ENCODE measurements at regions of chr2 and their contacts with region 1.

Region 1: GRCh38 chr2:156341452-156342253 is 9.1 kb upstream of the NR4A2 start:
- DNase-seq: peak; percentile 90
- ATAC-seq: peak; percentile 76
- H3K4me3 ChIP-seq: peak overlapping the region; percentile 95
- H3K27ac ChIP-seq: peak overlapping the region; percentile 98
- H3K4me1 ChIP-seq: peaks cover 43% of the 10 kb centered on the region
- H3K27me3 ChIP-seq: no peaks in the 10 kb centered on the region
- CTCF ChIP-seq: no peak

Region 2: DNA sequence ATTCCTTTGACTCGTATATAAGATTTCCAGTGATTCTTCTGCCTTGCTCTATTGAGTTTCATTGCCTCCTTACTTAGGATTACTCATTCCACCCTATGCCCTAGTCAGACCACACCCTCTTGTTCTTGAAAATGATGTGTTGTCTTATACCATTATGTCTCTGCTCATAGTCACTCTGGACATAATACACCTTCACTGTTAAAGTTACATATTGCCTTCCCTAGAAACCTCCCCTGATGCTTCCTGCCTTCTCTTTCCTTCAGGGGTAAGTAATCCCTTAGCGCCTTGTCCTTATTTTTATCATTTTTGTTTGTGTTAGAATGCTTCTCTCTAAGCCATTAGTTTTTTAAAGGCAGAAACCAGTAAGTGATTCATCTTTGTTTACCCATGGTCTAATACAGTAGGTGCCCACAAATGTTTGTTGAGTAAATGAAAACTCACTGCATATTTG is 113.8 kb after region 1 on chr2:
- CTCF ChIA-PET with region 1: no interaction called
- POLR2A ChIA-PET with region 1: no interaction called
- intact Hi-C with region 1: loop called (anchors 2 kb)
- DNase-seq: peak; percentile 92
- ATAC-seq: peak; percentile 92
- H3K4me3 ChIP-seq: peak overlapping the region; percentile 50; the same call in 1 of the 2 replicates
- H3K27ac ChIP-seq: peak overlapping the region; percentile 98
- H3K4me1 ChIP-seq: peaks cover 45% of the 10 kb centered on the region
- H3K27me3 ChIP-seq: no peaks in the 10 kb centered on the region
- CTCF ChIP-seq: no peak

Region 3: GRCh38 chr2:156553714-156554442 is 212.2 kb after region 1 on chr2:
- CTCF ChIA-PET with region 1: no interaction called
- POLR2A ChIA-PET with region 1: interaction called, 13 read pairs
- intact Hi-C with region 1: no loop called
- DNase-seq: no peak
- ATAC-seq: no peak
- H3K4me3 ChIP-seq: no peak overlapping the region
- H3K27ac ChIP-seq: no peak overlapping the region
- H3K4me1 ChIP-seq: no peaks in the 10 kb centered on the region
- H3K27me3 ChIP-seq: no peaks in the 10 kb centered on the region
- CTCF ChIP-seq: no peak

Region 4: DNA sequence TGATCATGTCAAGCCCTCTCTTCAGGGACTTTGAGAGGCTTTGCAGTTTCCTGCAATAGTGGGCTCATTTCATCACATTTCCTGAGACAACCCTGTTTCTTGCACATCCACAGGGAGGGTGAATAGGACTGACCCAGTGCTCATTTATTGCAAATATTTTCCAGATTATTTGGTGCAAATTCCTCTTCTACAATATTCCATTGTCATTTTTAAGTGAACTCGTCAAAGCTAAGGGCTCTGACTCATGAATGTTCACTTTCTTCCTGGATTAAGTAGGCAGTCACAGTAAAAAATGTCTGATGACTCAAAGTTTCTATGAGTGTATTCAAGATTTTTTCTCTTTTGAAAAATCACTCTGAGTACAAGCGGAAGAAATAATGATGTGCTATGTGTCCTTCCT is 690.4 kb after region 1 on chr2:
- CTCF ChIA-PET with region 1: no interaction called
- POLR2A ChIA-PET with region 1: no interaction called
- intact Hi-C with region 1: loop called (anchors 5 kb)
- DNase-seq: peak; percentile 96
- ATAC-seq: peak; percentile 95
- H3K4me3 ChIP-seq: no peak overlapping the region
- H3K27ac ChIP-seq: peak overlapping the region; percentile 85
- H3K4me1 ChIP-seq: peaks cover 30% of the 10 kb centered on the region
- H3K27me3 ChIP-seq: no peaks in the 10 kb centered on the region
- CTCF ChIP-seq: no peak

Region 5: DNA sequence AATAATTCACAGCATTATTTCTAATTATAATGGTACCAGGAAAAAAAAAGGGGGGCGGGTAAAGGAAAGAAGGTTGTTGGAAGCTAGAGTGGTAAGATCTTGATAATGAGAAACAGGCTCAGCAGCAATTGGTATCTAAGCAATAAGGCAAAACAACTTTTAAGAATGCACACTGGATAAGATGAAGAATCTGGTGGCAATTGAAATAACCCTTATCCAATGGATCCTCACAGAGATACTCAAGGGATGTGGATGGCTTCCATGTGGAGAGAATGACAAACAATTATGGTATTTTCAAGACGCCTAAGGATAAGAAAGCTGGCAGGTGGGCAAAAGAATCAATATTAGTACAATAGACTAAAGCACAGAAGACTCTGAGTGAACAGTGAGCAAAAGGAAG is 1913.6 kb after region 1 on chr2:
- CTCF ChIA-PET with region 1: no interaction called
- POLR2A ChIA-PET with region 1: no interaction called
- intact Hi-C with region 1: no loop called
- DNase-seq: no peak
- ATAC-seq: no peak
- H3K4me3 ChIP-seq: no peak overlapping the region
- H3K27ac ChIP-seq: no peak overlapping the region
- H3K4me1 ChIP-seq: no peaks in the 10 kb centered on the region
- H3K27me3 ChIP-seq: 0 out of 2 replicates have a peak, but pooled peaks cover 3% of the 10 kb centered on the region
- CTCF ChIP-seq: no peak

Measured in PC-3 (cell line).